Ovary (tissue), 10 donors: ENCODE measurements at regions of chr13 and their contacts with region 1.

Region 1: DNA sequence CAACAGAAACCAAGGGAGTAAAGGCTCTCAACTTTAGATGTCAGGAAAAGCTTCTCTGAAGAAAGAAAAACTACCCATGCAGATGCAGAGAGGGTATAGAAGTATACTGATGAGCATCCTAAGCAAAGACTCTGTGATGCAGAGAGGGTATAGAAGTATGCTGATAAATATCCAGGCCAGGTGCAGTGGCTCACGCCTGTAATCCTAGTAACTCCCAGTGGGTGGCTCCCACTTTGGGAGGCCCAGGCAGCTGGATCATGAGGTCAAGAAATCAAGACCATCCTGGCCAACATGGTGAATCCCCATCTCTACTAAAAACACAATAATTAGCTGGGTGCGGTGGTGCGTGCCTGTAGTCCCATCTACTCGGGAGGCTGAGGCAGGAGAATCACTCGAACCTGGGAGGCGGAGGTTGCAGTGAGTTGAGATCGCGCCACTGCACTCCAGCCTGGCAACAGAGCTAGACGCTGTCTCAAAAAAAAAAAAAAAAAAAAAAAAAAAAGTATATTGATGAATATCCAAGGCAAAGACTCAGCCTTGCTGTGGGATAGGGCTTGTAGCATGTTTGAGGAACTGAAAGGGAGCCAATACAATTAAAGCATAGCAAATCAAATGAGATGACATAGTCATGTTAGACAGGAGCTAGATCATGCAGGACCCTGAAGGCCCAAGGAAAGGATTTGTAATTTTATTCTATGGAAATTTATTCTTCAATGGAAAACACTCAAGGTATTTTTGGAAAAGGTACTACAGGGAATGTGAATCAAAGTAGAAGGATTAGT is 14.9 kb downstream of the UBL3 start:
- DNase-seq: no peak
- H3K4me3 ChIP-seq: no peak overlapping the region
- H3K27ac ChIP-seq: no peak overlapping the region
- H3K4me1 ChIP-seq: peaks cover 3% of the 10 kb centered on the region
- H3K27me3 ChIP-seq: no peaks in the 10 kb centered on the region
- CTCF ChIP-seq: no peak
- EP300 ChIP-seq: no peak
- POLR2A ChIP-seq: no peak

Region 2: DNA sequence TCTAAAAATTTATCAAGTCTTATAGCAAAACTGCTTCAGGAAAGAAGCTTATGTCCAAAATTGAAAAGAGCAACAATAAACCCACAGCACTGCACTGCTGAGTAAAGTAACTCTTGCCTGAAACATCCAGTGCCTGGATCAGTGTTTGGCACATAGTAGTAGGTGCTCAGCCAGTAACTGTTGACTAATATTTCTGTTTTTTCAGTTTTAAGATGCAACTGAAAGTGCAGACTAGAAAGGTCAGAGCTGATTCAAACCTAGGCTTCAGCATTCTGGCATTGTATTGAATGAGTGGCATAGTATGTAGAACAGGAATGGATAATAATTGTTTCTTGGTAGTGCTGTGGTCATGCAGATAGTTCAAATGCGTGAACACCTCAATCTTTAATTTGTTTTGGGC is 52.7 kb before region 1 on chr13:
- intact Hi-C with region 1: loop called in 1 of 4 experiments (anchors 10 kb)
- DNase-seq: no peak
- H3K4me3 ChIP-seq: no peak overlapping the region
- H3K27ac ChIP-seq: no peak overlapping the region
- H3K4me1 ChIP-seq: peaks cover 3% of the 10 kb centered on the region
- H3K27me3 ChIP-seq: no peaks in the 10 kb centered on the region
- CTCF ChIP-seq: no peak
- EP300 ChIP-seq: no peak
- POLR2A ChIP-seq: no peak

Region 3: DNA sequence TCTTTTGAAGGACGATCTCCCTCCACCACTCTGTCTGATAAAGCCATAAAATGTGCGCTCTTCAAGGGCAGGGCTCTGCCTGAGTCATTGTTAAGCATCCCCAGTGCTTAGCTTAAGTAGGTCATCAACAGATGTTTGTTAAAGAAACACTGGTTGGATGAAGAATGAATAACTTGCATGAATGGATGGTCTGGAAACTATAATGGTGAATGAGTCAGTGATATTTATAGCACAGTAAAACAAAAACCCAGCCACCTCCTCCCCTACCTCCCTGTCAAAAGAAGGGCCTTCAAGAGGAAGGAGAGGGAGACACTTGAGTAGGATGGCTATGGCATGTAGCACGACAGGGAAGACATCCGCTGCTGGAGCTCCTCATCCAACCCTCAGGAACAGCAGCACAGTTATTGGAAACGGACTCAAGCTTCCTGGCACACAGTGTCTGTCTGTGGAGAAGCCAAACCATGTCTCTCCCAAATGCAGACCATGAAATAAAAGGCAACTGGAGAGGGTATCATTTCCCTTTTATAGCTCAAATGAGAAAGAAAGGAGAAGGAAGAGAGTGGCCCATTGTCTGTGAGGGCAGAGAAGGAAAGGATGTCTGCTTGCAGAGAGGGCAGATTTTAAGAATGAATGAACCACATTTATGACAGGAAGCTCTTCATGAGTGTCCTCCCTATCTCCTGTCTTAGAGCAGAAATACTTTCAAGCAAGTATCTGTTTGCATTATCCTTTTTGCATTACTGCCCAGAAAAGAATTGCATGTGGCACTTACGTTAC is 198.4 kb after region 1 on chr13:
- intact Hi-C with region 1: no loop called
- DNase-seq: no peak
- H3K4me3 ChIP-seq: no peak overlapping the region
- H3K27ac ChIP-seq: no peak overlapping the region
- H3K4me1 ChIP-seq: no peaks in the 10 kb centered on the region
- H3K27me3 ChIP-seq: no peaks in the 10 kb centered on the region
- CTCF ChIP-seq: no peak
- EP300 ChIP-seq: no peak
- POLR2A ChIP-seq: no peak